WTC11 (cell line): ENCODE measurements at regions of chr22 and their contacts with region 1.

Region 1: DNA sequence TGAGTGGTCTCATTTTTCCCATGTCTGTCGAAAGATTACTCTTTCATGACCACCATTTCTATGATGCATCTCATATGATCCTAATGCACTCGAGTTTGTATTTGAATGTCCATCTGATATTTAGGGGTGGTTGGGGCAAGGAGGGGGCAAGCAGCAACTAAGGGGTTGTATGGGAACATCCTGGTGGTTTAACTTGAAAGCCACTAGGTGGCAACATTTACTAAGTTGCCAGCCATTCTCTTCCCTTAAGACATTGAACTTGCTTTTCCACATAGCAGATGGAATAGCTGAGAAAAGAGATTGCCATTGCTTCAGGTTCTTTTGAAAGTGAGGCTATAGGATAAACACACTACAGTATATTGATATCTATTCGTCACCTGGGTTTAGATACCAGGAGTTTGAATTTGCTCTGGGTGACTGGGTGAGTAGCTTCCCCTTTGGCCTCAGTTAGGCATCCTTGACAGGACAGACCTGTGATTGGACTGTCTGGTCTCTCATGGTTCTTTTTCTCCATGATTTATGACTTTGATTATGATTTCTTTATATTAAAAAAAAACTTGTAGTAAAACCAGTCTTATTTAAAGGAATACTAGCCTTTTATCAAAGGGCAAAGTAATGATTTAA is 32.4 kb downstream of the NF2 start:
- DNase-seq: no peak
- ATAC-seq: peak; percentile 90
- H3K4me3 Mint-ChIP-seq: no peak overlapping the region
- H3K27ac Mint-ChIP-seq: peak overlapping the region; percentile 39; the same call in 1 of the 2 replicates
- H3K4me1 Mint-ChIP-seq: peaks cover 3% of the 10 kb centered on the region; the same call in 1 of the 2 replicates
- H3K27me3 Mint-ChIP-seq: no peaks in the 10 kb centered on the region
- CTCF ChIP-seq: peak; percentile 36

Region 2: DNA sequence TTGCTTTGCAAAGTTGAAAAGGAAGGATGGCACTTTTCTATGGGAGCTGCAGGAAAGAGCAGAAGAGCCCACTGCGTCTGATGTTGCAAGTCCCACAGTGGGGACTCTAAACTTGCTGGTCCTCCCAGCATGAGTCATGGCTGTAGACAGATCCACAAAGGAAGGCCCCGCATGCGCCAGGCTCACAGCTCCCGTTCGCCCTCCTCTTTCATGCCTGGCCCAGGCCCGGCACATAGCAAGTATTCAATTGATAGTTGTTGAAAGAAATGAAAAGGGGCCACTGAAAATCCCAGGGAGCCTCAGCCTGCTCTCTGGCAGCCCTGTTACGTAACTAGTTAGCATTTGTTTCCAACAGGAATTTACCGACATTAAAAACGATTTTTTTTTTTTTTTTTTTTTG is 266.4 kb before region 1 on chr22:
- CTCF ChIA-PET with region 1: no interaction called
- POLR2A ChIA-PET with region 1: no interaction called
- DNase-seq: peak; percentile 42
- ATAC-seq: peak; percentile 85
- H3K4me3 Mint-ChIP-seq: no peak overlapping the region
- H3K27ac Mint-ChIP-seq: no peak overlapping the region
- H3K4me1 Mint-ChIP-seq: peaks cover 44% of the 10 kb centered on the region
- H3K27me3 Mint-ChIP-seq: no peaks in the 10 kb centered on the region
- CTCF ChIP-seq: no peak

Region 3: GRCh38 chr22:29625090-29625825 is 10.6 kb before region 1 on chr22:
- CTCF ChIA-PET with region 1: interaction called, 37 read pairs
- POLR2A ChIA-PET with region 1: no interaction called
- DNase-seq: peak; percentile 34
- ATAC-seq: peak; percentile 53
- H3K4me3 Mint-ChIP-seq: no peak overlapping the region
- H3K27ac Mint-ChIP-seq: peak overlapping the region; percentile 85
- H3K4me1 Mint-ChIP-seq: peaks cover 52% of the 10 kb centered on the region
- H3K27me3 Mint-ChIP-seq: no peaks in the 10 kb centered on the region
- CTCF ChIP-seq: peak; percentile 67

Region 4: GRCh38 chr22:29670626-29671025 is 34.8 kb after region 1 on chr22:
- CTCF ChIA-PET with region 1: no interaction called
- POLR2A ChIA-PET with region 1: no interaction called
- DNase-seq: no peak
- ATAC-seq: no peak
- H3K4me3 Mint-ChIP-seq: no peak overlapping the region
- H3K27ac Mint-ChIP-seq: peak overlapping the region; percentile 70
- H3K4me1 Mint-ChIP-seq: no peaks in the 10 kb centered on the region
- H3K27me3 Mint-ChIP-seq: no peaks in the 10 kb centered on the region
- CTCF ChIP-seq: no peak

Region 5: GRCh38 chr22:29701155-29701999 is 65.5 kb after region 1 on chr22:
- CTCF ChIA-PET with region 1: interaction called, 12 read pairs
- POLR2A ChIA-PET with region 1: no interaction called
- DNase-seq: peak; percentile 52
- ATAC-seq: peak; percentile 56
- H3K4me3 Mint-ChIP-seq: no peak overlapping the region
- H3K27ac Mint-ChIP-seq: no peak overlapping the region
- H3K4me1 Mint-ChIP-seq: peaks cover 43% of the 10 kb centered on the region
- H3K27me3 Mint-ChIP-seq: peaks cover 37% of the 10 kb centered on the region
- CTCF ChIP-seq: no peak

Region 6: DNA sequence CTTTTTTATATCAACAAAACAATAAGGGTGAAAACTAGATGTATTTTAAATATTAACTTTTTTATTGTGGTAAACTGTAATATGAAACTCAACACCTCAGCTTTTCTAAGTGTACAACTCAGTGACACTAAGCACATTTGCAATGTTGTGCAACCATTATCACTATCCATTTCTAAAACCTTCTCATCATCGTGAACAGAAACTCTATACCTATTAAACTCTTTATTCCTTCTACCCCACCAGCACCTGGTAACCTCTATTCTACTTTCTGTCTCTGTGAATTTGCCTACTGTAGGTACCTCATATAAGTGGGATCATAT is 453.8 kb after region 1 on chr22:
- CTCF ChIA-PET with region 1: interaction called, 10 read pairs
- POLR2A ChIA-PET with region 1: no interaction called
- DNase-seq: no peak
- ATAC-seq: no peak
- H3K4me3 Mint-ChIP-seq: no peak overlapping the region
- H3K27ac Mint-ChIP-seq: no peak overlapping the region
- H3K4me1 Mint-ChIP-seq: no peaks in the 10 kb centered on the region
- H3K27me3 Mint-ChIP-seq: peaks cover 2% of the 10 kb centered on the region; the same call in 1 of the 2 replicates
- CTCF ChIP-seq: no peak